WTC11 (cell line): ENCODE measurements at regions of chr17 and their contacts with region 1.

Region 1: GRCh38 chr17:8118769-8119580 is 661 bp upstream of the ALOXE3 start:
- DNase-seq: peak; percentile 91
- ATAC-seq: peak; percentile 44
- H3K4me3 Mint-ChIP-seq: peak overlapping the region; percentile 85
- H3K27ac Mint-ChIP-seq: 0 out of 2 replicates have a peak overlapping the region, but pooled peaks have one; percentile 69
- H3K4me1 Mint-ChIP-seq: peaks cover 9% of the 10 kb centered on the region
- H3K27me3 Mint-ChIP-seq: peaks cover 73% of the 10 kb centered on the region
- CTCF ChIP-seq: peak; percentile 41; the same call in 1 of the 2 replicates

Region 2: GRCh38 chr17:7903154-7904103 is 215.5 kb before region 1 on chr17:
- CTCF ChIA-PET with region 1: no interaction called
- POLR2A ChIA-PET with region 1: no interaction called
- DNase-seq: no peak
- ATAC-seq: no peak
- H3K4me3 Mint-ChIP-seq: no peak overlapping the region
- H3K27ac Mint-ChIP-seq: no peak overlapping the region
- H3K4me1 Mint-ChIP-seq: 0 out of 2 replicates have a peak, but pooled peaks cover 3% of the 10 kb centered on the region
- H3K27me3 Mint-ChIP-seq: no peaks in the 10 kb centered on the region
- CTCF ChIP-seq: no peak

Region 3: DNA sequence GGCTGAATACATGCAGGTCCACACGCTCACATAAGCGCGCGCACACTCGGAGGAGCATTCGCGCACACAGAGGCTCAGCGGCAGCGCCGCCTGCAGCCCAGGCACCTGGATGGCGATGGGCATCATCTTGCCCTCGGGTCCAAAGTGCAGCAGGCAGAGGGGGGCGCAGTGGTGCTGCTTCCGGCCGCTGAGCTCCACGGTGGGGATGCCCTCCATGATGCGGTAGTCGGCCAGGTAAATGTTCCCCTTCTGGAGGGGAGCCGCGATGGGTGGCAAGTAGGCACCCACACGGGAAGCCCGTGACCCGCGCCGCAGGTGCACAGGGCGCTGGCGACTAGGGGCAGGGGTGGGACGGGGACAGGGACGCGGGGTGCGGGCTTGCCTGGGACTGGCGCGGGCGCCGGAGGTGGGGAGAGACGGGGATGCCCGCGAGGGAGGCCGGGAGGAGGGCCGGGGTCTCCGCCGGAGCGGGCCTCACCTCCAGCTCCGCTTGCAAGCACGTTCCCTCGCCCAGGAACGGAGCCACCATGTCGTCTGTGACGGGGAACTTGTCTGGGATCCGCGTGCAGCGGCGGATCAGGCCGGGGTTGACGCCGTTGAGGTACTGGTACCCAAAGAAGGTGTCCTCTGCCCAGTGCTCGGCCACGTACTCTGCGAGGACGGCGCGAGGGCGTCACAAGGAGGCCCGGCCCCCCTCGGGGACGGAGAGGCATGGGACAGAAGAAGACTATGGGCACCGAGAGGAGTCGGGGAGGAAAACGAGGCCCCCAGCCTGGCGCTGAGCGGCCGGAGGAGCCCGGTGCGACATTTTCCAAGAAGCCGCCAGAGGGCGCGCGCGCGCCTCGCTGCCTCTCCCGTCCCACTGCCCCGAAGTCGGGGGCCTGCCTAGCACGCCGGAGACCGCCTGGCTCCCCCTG is 39.4 kb before region 1 on chr17:
- CTCF ChIA-PET with region 1: interaction called, 77 read pairs
- POLR2A ChIA-PET with region 1: interaction called, 4 read pairs
- DNase-seq: peak; percentile 86
- ATAC-seq: peak; percentile 82
- H3K4me3 Mint-ChIP-seq: peak overlapping the region; percentile 87
- H3K27ac Mint-ChIP-seq: no peak overlapping the region
- H3K4me1 Mint-ChIP-seq: peaks cover 15% of the 10 kb centered on the region
- H3K27me3 Mint-ChIP-seq: peaks cover 84% of the 10 kb centered on the region
- CTCF ChIP-seq: peak; percentile 85

Region 4: GRCh38 chr17:8133398-8133797 is 14.4 kb after region 1 on chr17:
- CTCF ChIA-PET with region 1: interaction called, 25 read pairs
- POLR2A ChIA-PET with region 1: interaction called, 7 read pairs
- DNase-seq: peak; percentile 64
- ATAC-seq: peak; percentile 79
- H3K4me3 Mint-ChIP-seq: peak overlapping the region; percentile 24
- H3K27ac Mint-ChIP-seq: peak overlapping the region; percentile 29
- H3K4me1 Mint-ChIP-seq: peaks cover 18% of the 10 kb centered on the region
- H3K27me3 Mint-ChIP-seq: peaks cover 18% of the 10 kb centered on the region
- CTCF ChIP-seq: no peak

Region 5: DNA sequence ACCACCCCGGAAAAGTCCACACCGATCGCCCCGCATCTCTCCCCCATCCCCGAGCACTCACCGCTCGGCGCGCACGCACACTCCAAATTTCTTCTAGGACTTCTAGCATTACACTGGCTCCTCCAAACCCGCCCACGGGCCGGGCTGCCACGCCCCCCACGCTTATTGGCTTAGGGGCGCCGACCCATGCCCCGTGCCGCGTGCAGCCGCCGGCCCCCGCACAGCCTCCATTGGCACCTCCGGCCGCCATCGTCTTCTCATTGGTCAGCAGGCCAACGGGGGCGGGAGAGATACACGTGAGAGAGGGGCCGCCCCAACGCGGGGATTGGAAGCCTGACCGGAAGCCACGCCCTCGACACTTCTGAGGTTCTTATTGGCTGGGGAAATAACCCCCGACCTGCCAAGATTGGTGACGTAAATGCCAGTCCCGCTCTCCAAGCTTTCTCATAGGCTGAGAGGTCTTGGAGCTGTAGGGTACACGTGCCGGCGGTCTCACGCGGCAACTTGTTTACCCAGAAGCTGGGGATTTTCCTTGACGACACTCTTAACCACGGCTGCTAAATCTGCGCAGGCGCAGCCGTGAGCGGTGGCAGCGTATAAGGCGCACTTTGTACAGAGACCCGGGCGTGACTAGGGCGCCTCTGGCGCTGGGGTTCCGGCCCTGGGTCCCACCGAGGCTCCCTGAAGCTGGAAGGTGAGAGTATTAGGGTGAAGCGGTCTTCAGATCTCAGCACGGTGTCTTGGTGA is 37.4 kb after region 1 on chr17:
- CTCF ChIA-PET with region 1: interaction called, 13 read pairs
- POLR2A ChIA-PET with region 1: interaction called, 5 read pairs
- DNase-seq: peak; percentile 100
- ATAC-seq: peak; percentile 67
- H3K4me3 Mint-ChIP-seq: no peak overlapping the region
- H3K27ac Mint-ChIP-seq: no peak overlapping the region
- H3K4me1 Mint-ChIP-seq: peaks cover 32% of the 10 kb centered on the region
- H3K27me3 Mint-ChIP-seq: peaks cover 3% of the 10 kb centered on the region; the same call in 1 of the 2 replicates
- CTCF ChIP-seq: no peak

Region 6: GRCh38 chr17:8222630-8223356 is 103.8 kb after region 1 on chr17:
- CTCF ChIA-PET with region 1: interaction called, 18 read pairs
- POLR2A ChIA-PET with region 1: interaction called, 9 read pairs
- DNase-seq: peak; percentile 95
- ATAC-seq: peak; percentile 18
- H3K4me3 Mint-ChIP-seq: peak overlapping the region; percentile 99
- H3K27ac Mint-ChIP-seq: peak overlapping the region; percentile 99
- H3K4me1 Mint-ChIP-seq: peaks cover 22% of the 10 kb centered on the region
- H3K27me3 Mint-ChIP-seq: peaks cover 7% of the 10 kb centered on the region
- CTCF ChIP-seq: no peak

Region 7: GRCh38 chr17:8273884-8274444 is 155.0 kb after region 1 on chr17:
- CTCF ChIA-PET with region 1: no interaction called
- POLR2A ChIA-PET with region 1: no interaction called
- DNase-seq: no peak
- ATAC-seq: no peak
- H3K4me3 Mint-ChIP-seq: no peak overlapping the region
- H3K27ac Mint-ChIP-seq: no peak overlapping the region
- H3K4me1 Mint-ChIP-seq: no peaks in the 10 kb centered on the region
- H3K27me3 Mint-ChIP-seq: peaks cover 5% of the 10 kb centered on the region; the same call in 1 of the 2 replicates
- CTCF ChIP-seq: no peak